PC-3 (cell line): ENCODE measurements at regions of chr3 and their contacts with region 1.

Region 1: DNA sequence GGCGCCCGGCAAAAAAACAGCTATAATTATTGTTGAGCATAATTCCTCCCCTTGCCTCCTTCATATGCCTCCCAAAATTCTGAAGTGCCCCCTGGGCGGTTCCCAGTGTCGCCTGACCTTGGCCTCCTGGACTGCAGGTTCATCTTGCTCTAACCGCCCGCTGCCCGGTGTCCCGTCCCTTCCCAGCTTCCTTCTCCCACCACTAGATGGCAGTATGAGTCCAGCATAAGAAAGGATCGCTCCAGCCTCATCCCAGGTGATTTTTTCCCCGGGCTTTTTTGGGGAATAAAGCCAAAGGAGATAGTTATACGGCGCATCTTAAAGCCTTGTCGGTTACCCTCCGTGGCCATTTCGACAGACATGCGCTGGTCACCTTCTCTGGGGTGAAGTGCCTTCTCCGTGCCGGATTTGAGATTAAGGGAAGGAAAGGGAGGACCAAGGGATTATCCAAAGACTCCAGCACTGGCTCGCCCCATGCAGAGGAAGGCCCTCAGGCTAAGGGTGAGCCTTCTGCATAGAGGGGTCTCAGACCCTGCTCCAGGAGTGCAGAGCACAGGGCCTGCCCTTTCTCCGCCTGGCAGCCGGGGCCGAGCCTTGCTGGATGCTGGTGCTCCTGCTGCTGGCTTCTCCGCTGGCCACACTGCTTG is 45.8 kb upstream of the TRA2B start:
- DNase-seq: peak; percentile 89
- ATAC-seq: peak; percentile 99
- H3K4me3 ChIP-seq: peak overlapping the region; percentile 48
- H3K27ac ChIP-seq: no peak overlapping the region
- H3K4me1 ChIP-seq: peaks cover 14% of the 10 kb centered on the region
- H3K27me3 ChIP-seq: no peaks in the 10 kb centered on the region
- CTCF ChIP-seq: peak; percentile 97

Region 2: GRCh38 chr3:185498503-185499396 is 484.9 kb before region 1 on chr3 and contains the start of gene TMEM41A:
- CTCF ChIA-PET with region 1: no interaction called
- POLR2A ChIA-PET with region 1: no interaction called
- intact Hi-C with region 1: no loop called
- DNase-seq: peak; percentile 93
- ATAC-seq: peak; percentile 93
- H3K4me3 ChIP-seq: peak within 1 kb of the TSS; percentile 98
- H3K27ac ChIP-seq: peak within 1 kb of the TSS; percentile 58
- H3K4me1 ChIP-seq: peaks cover 14% of the 10 kb centered on the region
- H3K27me3 ChIP-seq: no peaks in the 10 kb centered on the region
- CTCF ChIP-seq: no peak
- total RNA-seq, gene TMEM41A: 25.3 and 28.5 TPM in 2 replicates

Region 3: DNA sequence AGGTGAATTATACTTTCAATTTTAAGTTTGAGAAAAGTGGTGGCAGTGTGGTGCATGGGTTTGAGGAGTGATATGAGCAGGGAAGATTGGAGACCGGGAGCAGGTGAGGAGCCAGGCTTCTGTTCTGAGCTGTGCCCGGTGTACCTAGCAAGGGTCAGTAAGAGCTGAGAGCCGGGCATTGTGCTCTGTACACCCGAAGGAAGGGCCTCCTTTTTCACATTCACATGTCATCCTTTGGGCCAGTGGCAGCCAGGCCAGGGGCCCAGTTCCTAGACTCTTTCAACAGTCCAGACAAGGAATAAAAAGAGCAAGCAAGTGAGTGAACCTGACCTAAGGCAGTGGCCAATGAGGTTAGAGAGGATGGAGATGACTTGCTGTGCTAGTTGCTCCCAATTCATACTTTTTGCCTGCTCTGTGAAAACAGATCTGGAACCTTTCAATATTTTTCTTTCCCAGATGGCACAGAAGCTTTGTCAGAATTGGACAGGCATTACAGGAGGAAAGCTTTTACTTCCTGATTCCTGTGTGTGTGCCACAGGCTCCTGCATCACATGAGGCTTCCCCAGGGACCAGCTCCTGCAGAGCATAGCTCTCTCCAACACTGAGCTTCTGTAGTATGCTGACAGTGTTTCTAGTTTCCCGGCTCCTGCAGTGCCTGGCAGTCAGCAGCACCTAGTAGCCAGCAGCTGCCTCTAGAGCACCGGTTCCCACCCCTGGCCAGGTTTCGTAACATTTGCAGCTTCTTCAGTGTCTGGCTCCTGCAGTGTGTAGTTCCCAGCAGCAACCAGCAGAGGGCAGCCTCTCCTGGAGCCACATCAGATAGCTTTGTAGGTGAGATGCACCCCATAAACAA is 40.5 kb before region 1 on chr3:
- CTCF ChIA-PET with region 1: interaction called, 16 read pairs
- POLR2A ChIA-PET with region 1: no interaction called
- intact Hi-C with region 1: no loop called
- DNase-seq: peak; percentile 87
- ATAC-seq: peak; percentile 71
- H3K4me3 ChIP-seq: no peak overlapping the region
- H3K27ac ChIP-seq: no peak overlapping the region
- H3K4me1 ChIP-seq: peaks cover 36% of the 10 kb centered on the region
- H3K27me3 ChIP-seq: no peaks in the 10 kb centered on the region
- CTCF ChIP-seq: peak; percentile 99

Region 4: DNA sequence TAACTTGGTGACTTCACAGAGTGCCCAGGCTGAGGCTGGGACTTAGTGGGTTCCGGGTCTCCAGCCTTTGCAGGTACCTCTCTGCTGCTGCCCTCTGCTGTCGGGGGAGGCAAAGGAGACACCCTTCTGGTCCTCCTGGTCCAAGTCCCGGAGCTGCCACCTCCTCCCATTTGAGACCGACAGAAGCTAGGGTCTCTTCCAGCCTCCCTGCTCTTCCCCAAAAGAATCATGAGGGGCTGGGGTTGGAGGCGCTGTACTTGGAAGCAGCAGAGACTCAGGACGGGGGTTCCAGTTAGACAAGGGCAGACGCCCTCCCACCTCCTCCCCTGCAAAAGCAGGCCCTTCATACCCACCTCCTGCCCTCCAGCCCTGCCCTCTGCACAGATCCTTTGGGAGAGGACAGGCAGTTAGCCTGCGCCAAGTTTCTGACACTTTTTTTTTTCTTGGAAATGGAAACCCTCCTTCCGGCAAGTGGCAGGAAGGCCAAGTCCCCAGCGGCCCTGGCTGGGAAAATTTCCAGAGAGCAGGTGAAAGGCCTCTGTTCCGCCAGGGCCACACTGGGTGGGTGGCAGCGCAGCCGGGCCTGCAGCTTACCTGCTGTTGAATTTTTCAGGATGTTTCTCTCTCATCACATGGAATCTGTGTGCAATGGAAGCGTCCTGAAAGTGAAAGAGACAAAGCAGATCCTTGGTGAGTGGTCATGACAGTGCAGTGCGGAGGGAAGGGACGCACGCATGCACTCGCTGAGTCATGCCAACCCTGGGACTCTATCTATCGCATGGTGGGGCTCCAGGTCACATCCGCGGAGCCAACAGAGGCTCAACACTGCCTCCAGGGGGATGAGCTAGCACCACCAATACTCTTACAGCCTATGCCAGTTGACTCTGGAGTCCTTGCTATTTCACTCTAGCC is 258.5 kb after region 1 on chr3:
- CTCF ChIA-PET with region 1: interaction called, 13 read pairs
- POLR2A ChIA-PET with region 1: no interaction called
- intact Hi-C with region 1: loop called (anchors 1 kb)
- DNase-seq: peak; percentile 66
- ATAC-seq: peak; percentile 89
- H3K4me3 ChIP-seq: no peak overlapping the region
- H3K27ac ChIP-seq: no peak overlapping the region
- H3K4me1 ChIP-seq: no peaks in the 10 kb centered on the region
- H3K27me3 ChIP-seq: no peaks in the 10 kb centered on the region
- CTCF ChIP-seq: peak; percentile 77

Region 5: GRCh38 chr3:186540221-186540834 is 556.7 kb after region 1 on chr3:
- CTCF ChIA-PET with region 1: interaction called, 7 read pairs
- POLR2A ChIA-PET with region 1: interaction called, 5 read pairs
- intact Hi-C with region 1: loop called (anchors 1 kb)
- DNase-seq: peak; percentile 95
- ATAC-seq: peak; percentile 76
- H3K4me3 ChIP-seq: no peak overlapping the region
- H3K27ac ChIP-seq: peak overlapping the region; percentile 57
- H3K4me1 ChIP-seq: peaks cover 33% of the 10 kb centered on the region
- H3K27me3 ChIP-seq: no peaks in the 10 kb centered on the region
- CTCF ChIP-seq: peak; percentile 95

Region 6: GRCh38 chr3:186821429-186822367 is 838.1 kb after region 1 on chr3:
- CTCF ChIA-PET with region 1: no interaction called
- POLR2A ChIA-PET with region 1: no interaction called
- intact Hi-C with region 1: loop called (anchors 1 kb)
- DNase-seq: peak; percentile 80
- ATAC-seq: peak; percentile 50
- H3K4me3 ChIP-seq: no peak overlapping the region
- H3K27ac ChIP-seq: no peak overlapping the region
- H3K4me1 ChIP-seq: peaks cover 9% of the 10 kb centered on the region; the same call in 1 of the 2 replicates
- H3K27me3 ChIP-seq: no peaks in the 10 kb centered on the region
- CTCF ChIP-seq: peak; percentile 84